Panc1 (cell line): ENCODE measurements at regions of chr12 and their contacts with region 1.

Region 1: DNA sequence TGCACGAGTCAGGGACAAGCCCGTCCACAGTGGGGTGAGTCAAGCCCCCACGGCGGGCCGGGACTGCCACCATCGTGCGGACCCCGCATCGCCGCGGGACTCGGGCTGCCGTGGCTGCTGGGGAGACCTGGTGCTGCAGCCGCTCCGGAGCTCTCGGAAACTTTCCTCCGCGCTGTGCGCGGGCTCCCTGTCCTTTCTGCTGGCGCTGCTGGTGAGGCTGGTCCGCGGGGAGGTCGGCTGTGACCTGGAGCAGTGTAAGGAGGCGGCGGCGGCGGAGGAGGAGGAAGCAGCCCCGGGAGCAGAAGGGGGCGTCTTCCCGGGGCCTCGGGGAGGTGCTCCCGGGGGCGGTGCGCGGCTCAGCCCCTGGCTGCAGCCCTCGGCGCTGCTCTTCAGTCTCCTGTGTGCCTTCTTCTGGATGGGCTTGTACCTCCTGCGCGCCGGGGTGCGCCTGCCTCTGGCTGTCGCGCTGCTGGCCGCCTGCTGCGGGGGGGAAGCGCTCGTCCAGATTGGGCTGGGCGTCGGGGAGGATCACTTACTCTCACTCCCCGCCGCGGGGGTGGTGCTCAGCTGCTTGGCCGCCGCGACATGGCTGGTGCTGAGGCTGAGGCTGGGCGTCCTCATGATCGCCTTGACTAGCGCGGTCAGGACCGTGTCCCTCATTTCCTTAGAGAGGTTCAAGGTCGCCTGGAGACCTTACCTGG is 1.1 kb downstream of the PDE3A start:
- DNase-seq: no peak
- ATAC-seq: peak; percentile 45; the same call in 1 of the 2 replicates
- H3K4me3 ChIP-seq: peak overlapping the region in 1 of 2 experiments; percentile 45; a peak in 1 of 4 replicates
- H3K27ac ChIP-seq: no peak overlapping the region
- H3K4me1 ChIP-seq: no peaks in the 10 kb centered on the region
- H3K27me3 ChIP-seq: no peaks in the 10 kb centered on the region
- CTCF ChIP-seq: no peak

Region 2: DNA sequence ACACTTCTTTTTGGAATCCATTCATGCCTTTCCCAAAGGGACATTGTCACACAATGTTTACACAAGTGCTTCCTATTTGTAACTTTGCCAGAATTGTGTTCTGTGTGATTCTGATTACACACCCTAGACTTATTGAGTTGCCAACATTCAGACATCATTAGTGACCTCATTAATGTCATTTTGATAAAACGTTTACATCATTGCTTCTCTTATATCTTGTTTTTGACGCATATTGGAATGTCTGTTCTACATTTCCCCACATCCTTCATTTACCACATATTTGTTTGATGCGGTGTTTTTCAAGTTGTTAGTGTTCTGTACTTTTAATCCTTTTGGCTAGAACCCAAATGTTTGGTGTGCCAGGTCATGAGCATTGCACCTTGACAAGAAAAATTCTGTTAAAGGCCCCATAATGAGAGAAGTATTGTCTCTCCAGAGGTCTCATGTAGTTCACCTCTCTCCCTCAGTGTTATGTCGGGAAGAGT is 624.7 kb before region 1 on chr12:
- CTCF ChIA-PET with region 1: no interaction called
- POLR2A ChIA-PET with region 1: no interaction called
- in situ Hi-C with region 1: no loop called
- intact Hi-C with region 1: loop called (anchors 10 kb)
- DNase-seq: no peak
- ATAC-seq: no peak
- H3K4me3 ChIP-seq: no peak overlapping the region
- H3K27ac ChIP-seq: no peak overlapping the region
- H3K4me1 ChIP-seq: no peaks in the 10 kb centered on the region
- H3K27me3 ChIP-seq: no peaks in the 10 kb centered on the region
- CTCF ChIP-seq: no peak

Region 3: GRCh38 chr12:20415028-20415427 is 45.6 kb after region 1 on chr12:
- CTCF ChIA-PET with region 1: no interaction called
- POLR2A ChIA-PET with region 1: no interaction called
- in situ Hi-C with region 1: no loop called
- intact Hi-C with region 1: no loop called
- DNase-seq: no peak
- ATAC-seq: no peak
- H3K4me3 ChIP-seq: no peak overlapping the region
- H3K27ac ChIP-seq: no peak overlapping the region
- H3K4me1 ChIP-seq: no peaks in the 10 kb centered on the region
- H3K27me3 ChIP-seq: no peaks in the 10 kb centered on the region
- CTCF ChIP-seq: no peak

Region 4: GRCh38 chr12:20527417-20528163 is 158.1 kb after region 1 on chr12:
- CTCF ChIA-PET with region 1: no interaction called
- POLR2A ChIA-PET with region 1: no interaction called
- in situ Hi-C with region 1: no loop called
- intact Hi-C with region 1: no loop called
- DNase-seq: no peak
- ATAC-seq: no peak
- H3K4me3 ChIP-seq: no peak overlapping the region
- H3K27ac ChIP-seq: no peak overlapping the region
- H3K4me1 ChIP-seq: no peaks in the 10 kb centered on the region
- H3K27me3 ChIP-seq: no peaks in the 10 kb centered on the region
- CTCF ChIP-seq: no peak